Common myeloid progenitor, CD34-positive (primary cell): ENCODE measurements at regions of chr20 and their contacts with region 1.

Region 1: DNA sequence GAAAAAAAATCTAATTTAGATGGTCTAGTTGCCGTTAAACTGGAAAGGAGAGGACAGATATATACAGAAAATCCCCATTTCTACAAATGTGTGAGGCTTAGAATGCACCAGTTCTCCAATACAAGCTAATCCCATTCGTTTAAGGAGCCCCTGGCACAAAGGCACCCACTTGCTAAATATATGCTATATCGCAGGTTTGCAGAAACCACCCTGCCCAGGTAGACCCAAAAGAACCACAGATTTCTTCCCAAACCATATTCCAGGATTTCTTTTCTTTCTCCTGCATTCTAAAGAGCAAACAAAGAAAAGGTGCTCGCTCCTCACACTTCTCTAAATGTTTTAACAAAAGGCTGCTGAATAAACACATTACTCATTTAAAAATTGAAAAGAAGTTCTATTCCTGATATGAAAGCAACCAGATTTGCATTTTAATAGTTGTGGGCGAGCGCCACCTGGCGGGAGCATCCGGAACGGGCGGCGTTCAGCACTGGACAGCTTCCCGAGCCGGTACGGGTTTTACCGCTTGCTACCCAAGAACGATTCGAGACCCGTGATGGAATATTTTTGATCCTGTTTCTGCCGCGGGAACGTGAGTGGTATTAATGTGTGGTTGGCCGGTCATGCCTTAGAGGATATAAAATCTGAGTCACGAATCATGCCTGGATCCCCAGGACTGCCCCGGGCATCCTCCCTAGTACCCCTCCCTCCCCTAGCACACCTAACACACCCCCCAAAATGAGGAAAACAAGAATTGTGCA is 2.1 kb downstream of the PTPRT start:
- DNase-seq: peak; percentile 50 to 79 (median 78)
- H3K4me3 ChIP-seq: no peak overlapping the region
- H3K27ac ChIP-seq: no peak overlapping the region
- H3K4me1 ChIP-seq: peaks cover 0 to 14% (median 5%) of the 10 kb centered on the region in 4 experiments
- H3K27me3 ChIP-seq: peaks cover 8 to 81% (median 40%) of the 10 kb centered on the region in 5 experiments

Region 2: GRCh38 chr20:41738604-41739206 is 1449.0 kb before region 1 on chr20:
- CTCF ChIA-PET with region 1: interaction called, 12 read pairs
- POLR2A ChIA-PET with region 1: no interaction called
- DNase-seq: peak; percentile 31 to 57 (median 53)
- H3K4me3 ChIP-seq: no peak overlapping the region
- H3K27ac ChIP-seq: no peak overlapping the region
- H3K4me1 ChIP-seq: peaks cover 0 to 1% (median 0%) of the 10 kb centered on the region in 4 experiments
- H3K27me3 ChIP-seq: no peaks in the 10 kb centered on the region